CD14-positive monocyte (primary cell): ENCODE measurements at regions of chr1 and their contacts with region 1.

Region 1: GRCh38 chr1:27392096-27392777 is at the start of gene GPR3:
- DNase-seq: peak; percentile 91 to 94 (median 94)
- H3K4me3 ChIP-seq: peak within 1 kb of the TSS in 2 of 3 experiments; percentile 2 to 62
- H3K4me3 Mint-ChIP-seq: peak within 1 kb of the TSS; percentile 81 to 90
- H3K27ac ChIP-seq: no peak within 1 kb of the TSS
- H3K27ac Mint-ChIP-seq: peak within 1 kb of the TSS; percentile 65 to 91 (median 87)
- H3K4me1 ChIP-seq: peaks cover 16 to 18% of the 10 kb centered on the region in 2 donors
- H3K4me1 Mint-ChIP-seq: peaks cover 16% of the 10 kb centered on the region
- H3K27me3 ChIP-seq: peaks cover 0 to 19% of the 10 kb centered on the region in 2 donors
- H3K27me3 Mint-ChIP-seq: peaks cover 20 to 24% (median 22%) of the 10 kb centered on the region in 3 donors
- CTCF ChIP-seq: peak; percentile 46
- polyA plus RNA-seq, gene GPR3: 0.26 to 2.7 TPM in 2 of 3 donors, not detected in the other

Region 2: GRCh38 chr1:27102707-27103491 is 289.3 kb before region 1 on chr1:
- intact Hi-C with region 1: loop called in 1 of 2 experiments (anchors 10 kb)
- DNase-seq: peak; percentile 65 to 73 (median 69)
- H3K4me3 ChIP-seq: no peak overlapping the region
- H3K4me3 Mint-ChIP-seq: no peak overlapping the region
- H3K27ac ChIP-seq: no peak overlapping the region
- H3K27ac Mint-ChIP-seq: peak overlapping the region in 4 of 7 donors; percentile 71 to 83 (median 75)
- H3K4me1 ChIP-seq: peaks cover 42 to 56% of the 10 kb centered on the region in 2 donors
- H3K4me1 Mint-ChIP-seq: peaks cover 45% of the 10 kb centered on the region
- H3K27me3 ChIP-seq: no peaks in the 10 kb centered on the region
- H3K27me3 Mint-ChIP-seq: peaks cover 0 to 9% (median 0%) of the 10 kb centered on the region in 3 donors
- CTCF ChIP-seq: peak; percentile 99

Region 3: GRCh38 chr1:27300341-27301051 is 91.7 kb before region 1 on chr1:
- intact Hi-C with region 1: loop called (anchors 1 to 2 kb)
- DNase-seq: peak; percentile 76 to 83 (median 81)
- H3K4me3 ChIP-seq: peak overlapping the region in 1 of 3 experiments; percentile 27
- H3K4me3 Mint-ChIP-seq: no peak overlapping the region
- H3K27ac ChIP-seq: peak overlapping the region; percentile 75 to 84
- H3K27ac Mint-ChIP-seq: peak overlapping the region; percentile 72 to 92 (median 89)
- H3K4me1 ChIP-seq: peaks cover 25 to 26% of the 10 kb centered on the region in 2 donors
- H3K4me1 Mint-ChIP-seq: peaks cover 23% of the 10 kb centered on the region
- H3K27me3 ChIP-seq: no peaks in the 10 kb centered on the region
- H3K27me3 Mint-ChIP-seq: no peaks in the 10 kb centered on the region
- CTCF ChIP-seq: peak; percentile 98

Region 4: GRCh38 chr1:27357281-27358037 is 34.8 kb before region 1 on chr1:
- intact Hi-C with region 1: loop called (anchors 2 to 5 kb)
- DNase-seq: peak; percentile 65 to 74 (median 65)
- H3K4me3 ChIP-seq: peak overlapping the region; percentile 3 to 64 (median 6)
- H3K4me3 Mint-ChIP-seq: peak overlapping the region; percentile 64 to 73
- H3K27ac ChIP-seq: no peak overlapping the region
- H3K27ac Mint-ChIP-seq: no peak overlapping the region
- H3K4me1 ChIP-seq: peaks cover 21 to 32% of the 10 kb centered on the region in 2 donors
- H3K4me1 Mint-ChIP-seq: peaks cover 28% of the 10 kb centered on the region
- H3K27me3 ChIP-seq: peaks cover 0 to 20% of the 10 kb centered on the region in 2 donors
- H3K27me3 Mint-ChIP-seq: peaks cover 14 to 35% (median 28%) of the 10 kb centered on the region in 3 donors
- CTCF ChIP-seq: peak; percentile 100

Region 5: GRCh38 chr1:27365372-27366112 is 26.7 kb before region 1 on chr1:
- intact Hi-C with region 1: loop called (anchors 2 kb)
- DNase-seq: peak; percentile 71 to 78 (median 71)
- H3K4me3 ChIP-seq: peak overlapping the region; percentile 64 to 84 (median 73)
- H3K4me3 Mint-ChIP-seq: peak overlapping the region; percentile 86 to 94
- H3K27ac ChIP-seq: peak overlapping the region; percentile 52 to 64
- H3K27ac Mint-ChIP-seq: peak overlapping the region; percentile 77 to 98 (median 93)
- H3K4me1 ChIP-seq: peaks cover 58 to 67% of the 10 kb centered on the region in 2 donors
- H3K4me1 Mint-ChIP-seq: peaks cover 63% of the 10 kb centered on the region
- H3K27me3 ChIP-seq: peaks cover 0 to 8% of the 10 kb centered on the region in 2 donors
- H3K27me3 Mint-ChIP-seq: peaks cover 7 to 16% (median 13%) of the 10 kb centered on the region in 3 donors
- CTCF ChIP-seq: no peak